ENCODE measurements at regions of chr4 and their contacts with region 1.

Region 1: GRCh38 chr4:70515367-70516245 is 2.8 kb upstream of the AMTN start:
- DNase-seq: no peak
- ATAC-seq: no peak

Region 2: DNA sequence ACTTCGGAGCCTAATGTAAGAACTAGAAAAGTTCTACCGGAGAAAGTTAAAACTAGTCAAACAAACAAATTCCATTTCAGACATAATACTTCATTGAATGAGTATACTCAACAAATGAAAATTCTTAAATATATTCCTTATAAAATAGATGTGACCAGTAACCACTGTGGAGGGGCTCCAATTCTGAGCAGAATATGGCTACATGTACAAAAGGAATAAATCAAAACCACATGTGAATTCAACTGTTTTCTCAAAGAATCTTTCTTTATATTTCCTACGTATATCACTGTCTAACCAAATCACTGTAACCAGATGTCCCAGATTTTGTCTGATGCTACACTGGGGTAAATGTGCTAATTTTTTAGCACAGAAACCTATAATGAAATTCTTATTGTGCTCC is 416.4 kb before region 1 on chr4:
- intact Hi-C with region 1: loop called (anchors 5 kb)
- DNase-seq: no peak
- ATAC-seq: no peak

Region 3: DNA sequence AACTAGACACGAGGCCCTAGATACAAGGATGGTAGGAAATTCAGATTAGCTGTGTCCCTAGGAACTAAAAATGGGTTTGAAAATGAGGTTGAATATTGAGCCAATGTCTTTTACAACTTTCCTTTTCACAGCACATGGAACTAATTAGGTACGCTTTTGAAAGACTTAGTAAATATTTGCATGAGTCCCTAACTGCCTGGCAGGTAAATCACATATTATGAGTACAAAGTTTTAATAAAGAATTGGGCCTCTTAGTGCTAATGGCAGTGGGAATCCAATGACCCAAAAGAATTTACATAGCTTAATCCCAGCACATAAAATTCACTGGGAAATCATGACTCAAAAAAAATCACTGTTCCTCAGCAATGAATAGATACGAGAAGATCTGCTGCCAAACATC is 26.9 kb before region 1 on chr4:
- intact Hi-C with region 1: no loop called
- DNase-seq: no peak
- ATAC-seq: no peak